ENCODE measurements at regions of chr13 and their contacts with region 1.

Region 1: DNA sequence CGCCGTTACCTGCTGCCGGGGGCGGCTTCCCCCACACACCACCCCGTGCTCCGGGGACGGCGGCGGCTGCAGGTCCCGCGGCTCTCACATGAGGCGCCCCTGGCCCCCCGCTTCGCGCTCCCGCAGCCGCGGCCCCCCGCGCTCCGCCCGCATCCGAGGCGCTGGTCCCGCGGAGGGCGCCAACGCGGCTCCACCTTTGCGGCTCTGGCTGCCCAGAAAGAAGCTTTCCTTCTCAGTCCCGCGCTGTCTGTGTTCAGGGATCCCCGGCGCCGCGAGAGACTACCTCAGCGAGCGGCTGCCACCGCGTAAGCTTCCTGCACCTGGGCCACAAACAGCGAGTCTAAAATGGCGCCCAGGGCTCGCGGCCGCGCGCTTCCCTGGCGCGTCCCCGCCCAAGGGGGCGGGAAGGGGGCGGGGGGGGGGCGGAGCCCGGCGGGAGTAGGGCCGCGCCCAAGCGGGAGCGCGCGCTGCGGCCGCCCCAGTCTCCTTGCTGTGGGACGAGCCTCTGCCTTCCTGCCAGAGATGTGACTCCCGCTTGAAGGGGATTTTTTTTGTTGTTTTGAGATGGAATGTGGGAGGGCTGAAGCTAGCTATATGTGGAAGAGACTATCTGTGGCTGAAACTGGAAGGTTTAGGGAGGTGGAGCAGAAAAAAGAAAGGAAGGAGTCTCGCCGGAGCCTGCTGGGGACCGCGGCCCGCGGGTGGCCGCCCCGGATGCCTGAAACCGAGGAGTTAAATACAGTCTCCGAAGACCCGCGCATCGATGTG is at the start of gene FBXL3:
- DNase-seq: peak; percentile 68 to 92 (median 80)
- ATAC-seq: peak; percentile 64
- H3K4me3 ChIP-seq: peak within 1 kb of the TSS; percentile 73 to 80
- H3K4me3 Mint-ChIP-seq: peak within 1 kb of the TSS; percentile 97
- H3K27ac ChIP-seq: peak within 1 kb of the TSS; percentile 80 to 97
- H3K27ac Mint-ChIP-seq: peak within 1 kb of the TSS; percentile 99
- H3K4me1 ChIP-seq: peaks cover 40% of the 10 kb centered on the region
- H3K4me1 Mint-ChIP-seq: peaks cover 51% of the 10 kb centered on the region
- H3K27me3 ChIP-seq: no peaks in the 10 kb centered on the region
- H3K27me3 Mint-ChIP-seq: no peaks in the 10 kb centered on the region
- CTCF ChIP-seq: no peak
- total RNA-seq, gene FBXL3: 91.3 to 97.0 TPM

Region 2: GRCh38 chr13:75537401-75538365 is 1489.3 kb before region 1 on chr13 and contains the start of gene COMMD6:
- CTCF ChIA-PET with region 1: no interaction called
- POLR2A ChIA-PET with region 1: no interaction called
- intact Hi-C with region 1: loop called in 1 of 2 experiments (anchors 5 kb)
- DNase-seq: peak; percentile 34 to 86 (median 68)
- ATAC-seq: peak; percentile 94
- H3K4me3 ChIP-seq: peak within 1 kb of the TSS; percentile 71 to 87
- H3K4me3 Mint-ChIP-seq: peak within 1 kb of the TSS; percentile 98
- H3K27ac ChIP-seq: peak within 1 kb of the TSS; percentile 43 to 71
- H3K27ac Mint-ChIP-seq: peak within 1 kb of the TSS; percentile 96
- H3K4me1 ChIP-seq: peaks cover 14% of the 10 kb centered on the region
- H3K4me1 Mint-ChIP-seq: peaks cover 46% of the 10 kb centered on the region
- H3K27me3 ChIP-seq: no peaks in the 10 kb centered on the region
- H3K27me3 Mint-ChIP-seq: no peaks in the 10 kb centered on the region
- CTCF ChIP-seq: no peak
- total RNA-seq, gene COMMD6: 191 to 204 TPM

Region 3: GRCh38 chr13:75635828-75636435 is 1391.1 kb before region 1 on chr13 and contains the start of gene LMO7:
- CTCF ChIA-PET with region 1: no interaction called
- POLR2A ChIA-PET with region 1: no interaction called
- intact Hi-C with region 1: loop called in 1 of 2 experiments (anchors 5 kb)
- DNase-seq: peak in 8 of 9 experiments; percentile 19 to 75 (median 52)
- ATAC-seq: peak; percentile 57
- H3K4me3 ChIP-seq: peak within 1 kb of the TSS; percentile 65 to 82
- H3K4me3 Mint-ChIP-seq: peak within 1 kb of the TSS; percentile 84
- H3K27ac ChIP-seq: no peak within 1 kb of the TSS
- H3K27ac Mint-ChIP-seq: peak within 1 kb of the TSS; percentile 79
- H3K4me1 ChIP-seq: peaks cover 3% of the 10 kb centered on the region
- H3K4me1 Mint-ChIP-seq: peaks cover 20% of the 10 kb centered on the region
- H3K27me3 ChIP-seq: no peaks in the 10 kb centered on the region
- H3K27me3 Mint-ChIP-seq: peaks cover 7% of the 10 kb centered on the region
- CTCF ChIP-seq: no peak
- total RNA-seq, gene LMO7: 26.4 to 27.2 TPM

Region 4: GRCh38 chr13:76991796-76992547 is 35.0 kb before region 1 on chr13 and contains the start of gene CLN5:
- CTCF ChIA-PET with region 1: no interaction called
- POLR2A ChIA-PET with region 1: interaction called, 99 read pairs
- intact Hi-C with region 1: loop called (anchors 1 kb)
- DNase-seq: peak; percentile 91 to 98 (median 94)
- ATAC-seq: peak; percentile 83
- H3K4me3 ChIP-seq: peak within 1 kb of the TSS; percentile 72 to 86
- H3K4me3 Mint-ChIP-seq: peak within 1 kb of the TSS; percentile 95
- H3K27ac ChIP-seq: peak within 1 kb of the TSS; percentile 84 to 97
- H3K27ac Mint-ChIP-seq: peak within 1 kb of the TSS; percentile 99
- H3K4me1 ChIP-seq: peaks cover 31% of the 10 kb centered on the region
- H3K4me1 Mint-ChIP-seq: peaks cover 53% of the 10 kb centered on the region
- H3K27me3 ChIP-seq: peaks cover 0 to 13% of the 10 kb centered on the region in 2 experiments
- H3K27me3 Mint-ChIP-seq: peaks cover 12% of the 10 kb centered on the region
- CTCF ChIP-seq: no peak
- total RNA-seq, gene CLN5: 23.3 to 23.4 TPM

Region 5: GRCh38 chr13:77002590-77003190 is 24.3 kb before region 1 on chr13:
- CTCF ChIA-PET with region 1: no interaction called
- POLR2A ChIA-PET with region 1: interaction called, 17 read pairs
- intact Hi-C with region 1: loop called in 1 of 2 experiments (anchors 2 kb)
- DNase-seq: peak in 2 of 9 experiments; percentile 28 to 39
- ATAC-seq: no peak
- H3K4me3 ChIP-seq: no peak overlapping the region
- H3K4me3 Mint-ChIP-seq: no peak overlapping the region
- H3K27ac ChIP-seq: no peak overlapping the region
- H3K27ac Mint-ChIP-seq: peak overlapping the region; percentile 5
- H3K4me1 ChIP-seq: peaks cover 23% of the 10 kb centered on the region
- H3K4me1 Mint-ChIP-seq: peaks cover 53% of the 10 kb centered on the region
- H3K27me3 ChIP-seq: no peaks in the 10 kb centered on the region
- H3K27me3 Mint-ChIP-seq: no peaks in the 10 kb centered on the region
- CTCF ChIP-seq: peak; percentile 66